Dorsolateral prefrontal cortex (tissue), 120 donors: ENCODE measurements at regions of chr17 and their contacts with region 1.

Region 1: GRCh38 chr17:80991645-80992076 is at the start of gene CHMP6:
- DNase-seq: peak in 8 of 10 donors; percentile 52 to 83 (median 66)
- H3K4me3 ChIP-seq: peak within 1 kb of the TSS; percentile 57 to 99 (median 83)
- H3K27ac ChIP-seq: peak within 1 kb of the TSS in 40 of 59 donors; percentile 7 to 88 (median 62)
- H3K27me3 ChIP-seq: no peaks in the 10 kb centered on the region
- CTCF ChIP-seq: peak in 54 of 56 donors; percentile 7 to 84 (median 55)
- total RNA-seq, gene CHMP6: 15.4 to 33.4 (median 22.0) TPM

Region 2: DNA sequence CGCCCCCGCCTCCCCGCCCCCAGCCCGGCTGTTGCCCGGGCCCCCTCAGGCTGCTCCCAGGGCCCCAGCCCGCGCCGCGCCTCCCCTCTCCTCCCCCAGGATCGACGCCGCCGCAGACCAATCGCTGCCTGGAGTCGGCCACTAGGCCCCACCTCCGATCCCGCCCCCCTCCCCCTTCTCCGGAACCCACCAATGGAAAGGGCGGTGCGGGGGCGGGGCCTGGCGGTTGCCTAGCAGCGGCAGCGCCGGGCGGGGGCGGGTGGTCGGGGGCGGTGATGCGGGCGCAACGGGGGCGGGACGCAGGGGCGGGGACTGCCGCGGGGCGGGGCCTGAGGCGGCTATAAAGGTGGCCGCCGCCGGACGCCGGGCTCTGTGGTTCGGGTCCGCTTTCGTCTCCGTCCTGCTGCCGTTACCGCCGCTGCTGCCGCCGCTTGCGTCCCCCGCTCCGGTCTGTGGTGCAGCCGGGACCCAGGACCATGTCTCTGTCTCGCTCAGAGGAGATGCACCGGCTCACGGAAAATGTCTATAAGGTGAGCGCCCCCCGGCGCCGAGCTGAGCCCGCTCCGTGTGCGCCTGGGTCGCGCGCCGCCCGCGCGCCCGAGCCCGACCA is 43.2 kb after region 1 on chr17 and contains the start of gene BAIAP2:
- intact Hi-C with region 1: loop called (anchors 5 kb)
- DNase-seq: peak; percentile 91 to 99 (median 96)
- H3K4me3 ChIP-seq: peak within 1 kb of the TSS; percentile 43 to 80 (median 66)
- H3K27ac ChIP-seq: peak within 1 kb of the TSS in 52 of 59 donors; percentile 24 to 88 (median 71)
- H3K27me3 ChIP-seq: no peaks in the 10 kb centered on the region
- CTCF ChIP-seq: peak in 1 of 56 donors; percentile 13
- total RNA-seq, gene BAIAP2: 104 to 353 (median 235) TPM

Region 3: GRCh38 chr17:81101614-81102306 is 110.1 kb after region 1 on chr17:
- intact Hi-C with region 1: loop called (anchors 1 to 2 kb)
- DNase-seq: peak; percentile 68 to 89 (median 77)
- H3K4me3 ChIP-seq: peak overlapping the region in 4 of 59 donors; percentile 1 to 30 (median 10)
- H3K27ac ChIP-seq: peak overlapping the region in 41 of 59 donors; percentile 6 to 84 (median 55)
- H3K27me3 ChIP-seq: no peaks in the 10 kb centered on the region
- CTCF ChIP-seq: peak; percentile 92 to 100 (median 100)

Region 4: DNA sequence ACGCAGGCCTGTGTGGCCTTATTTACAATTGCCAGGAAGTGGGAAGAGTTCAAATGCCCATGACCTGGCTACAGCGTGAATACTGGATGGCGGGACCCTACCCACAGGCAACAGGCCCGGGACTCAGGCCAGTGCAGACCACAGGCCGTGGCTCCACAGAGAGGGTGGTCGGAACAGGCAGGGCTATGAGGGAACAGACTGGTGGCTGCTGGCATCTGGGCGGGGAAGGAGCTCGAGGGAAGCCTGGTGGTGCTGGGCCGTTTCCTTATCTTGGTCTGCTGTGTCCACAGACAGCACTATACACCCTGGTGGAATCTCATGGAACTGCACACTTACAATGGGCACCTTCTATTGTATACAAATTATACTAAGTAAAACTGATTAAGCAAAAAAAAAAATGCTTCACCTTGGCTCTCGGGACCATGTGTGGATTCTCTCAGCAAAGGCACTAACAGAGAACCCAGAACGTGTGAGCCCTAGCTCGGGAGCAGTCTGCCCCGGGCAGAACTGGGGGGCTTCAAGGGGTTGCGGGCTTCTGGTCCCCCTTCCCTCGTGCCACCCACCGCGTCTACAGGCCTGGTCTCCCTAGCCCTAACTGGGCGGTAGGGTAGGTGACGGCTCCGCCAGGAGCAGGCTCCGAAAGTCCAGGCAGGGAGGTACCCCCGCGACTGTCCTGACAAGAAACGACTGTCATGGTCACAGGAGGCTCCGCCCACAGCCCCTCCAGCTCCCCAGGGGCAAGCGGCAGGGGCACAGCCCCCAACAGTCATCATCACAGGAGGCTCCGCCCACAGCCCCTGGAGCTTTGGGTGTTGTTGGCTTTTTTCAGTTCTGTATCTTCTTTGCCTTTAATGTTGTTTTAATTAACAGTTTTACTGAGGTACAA is 209.3 kb after region 1 on chr17:
- intact Hi-C with region 1: no loop called
- DNase-seq: peak in 8 of 10 donors; percentile 64 to 80 (median 68)
- H3K4me3 ChIP-seq: no peak overlapping the region
- H3K27ac ChIP-seq: peak overlapping the region in 37 of 59 donors; percentile 14 to 83 (median 58)
- H3K27me3 ChIP-seq: no peaks in the 10 kb centered on the region
- CTCF ChIP-seq: peak; percentile 50 to 86 (median 74)